Left ventricle myocardium superior (tissue), 1 donor: ENCODE measurements at regions of chr14 and their contacts with region 1.

Region 1: GRCh38 chr14:50532502-50533240 is at the start of gene MAP4K5:
- DNase-seq: peak; percentile 96
- ATAC-seq: peak; percentile 99
- total RNA-seq, gene MAP4K5: 16.3 TPM

Region 2: DNA sequence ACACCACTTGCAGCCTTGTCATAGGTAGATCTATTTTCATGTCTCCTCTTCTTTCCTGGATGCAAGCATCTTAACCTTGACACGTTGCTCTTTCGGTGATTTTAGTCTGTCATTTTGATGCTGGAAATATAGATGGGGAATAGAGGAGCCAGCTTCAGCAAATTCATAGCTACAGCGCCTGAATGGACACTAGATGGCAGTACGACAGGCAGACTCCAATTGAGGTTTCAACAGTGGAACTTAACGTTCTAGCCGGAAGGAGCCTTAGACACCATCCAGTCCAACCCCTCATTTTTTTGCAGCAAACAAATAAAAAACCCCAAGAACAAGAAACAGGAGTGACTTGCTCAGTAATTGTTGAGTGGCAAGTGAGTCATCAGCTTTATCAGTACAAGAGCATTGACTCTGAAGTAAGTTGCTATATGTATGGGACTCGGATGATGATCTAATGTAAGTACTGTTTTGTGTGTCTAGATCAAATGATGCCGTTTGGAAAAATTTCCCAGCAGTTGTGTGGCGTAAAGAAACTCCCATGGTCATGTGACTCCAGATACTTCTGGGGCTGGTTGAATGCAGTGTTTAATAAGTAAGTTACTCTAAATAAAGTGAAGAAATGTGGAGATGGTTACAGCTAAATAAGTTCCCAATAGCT is 211.5 kb before region 1 on chr14:
- intact Hi-C with region 1: loop called (anchors 2 kb)
- DNase-seq: no peak
- ATAC-seq: peak; percentile 98